Astrocyte of the cerebellum (primary cell): ENCODE measurements at regions of chr1 and their contacts with region 1.

Region 1: GRCh38 chr1:9823943-9824701 is at the start of gene CLSTN1:
- DNase-seq: peak; percentile 47
- H3K4me3 ChIP-seq: peak within 1 kb of the TSS; percentile 92
- CTCF ChIP-seq: no peak

Region 2: GRCh38 chr1:9629445-9630201 is 194.5 kb before region 1 on chr1:
- in situ Hi-C with region 1: loop called (anchors 25 kb)
- DNase-seq: no peak
- H3K4me3 ChIP-seq: no peak overlapping the region
- CTCF ChIP-seq: no peak

Region 3: GRCh38 chr1:9700340-9700739 is 123.8 kb before region 1 on chr1:
- in situ Hi-C with region 1: no loop called
- DNase-seq: peak; percentile 40
- H3K4me3 ChIP-seq: no peak overlapping the region
- CTCF ChIP-seq: no peak